Psoas muscle (tissue), 8 donors: ENCODE measurements at regions of chr4 and their contacts with region 1.

Region 1: GRCh38 chr4:8340781-8341241 is 71.3 kb downstream of the HTRA3 start:
- DNase-seq: peak; percentile 81 to 92
- ATAC-seq: peak; percentile 74 to 85 (median 78)
- H3K4me3 ChIP-seq: no peak overlapping the region
- H3K27ac ChIP-seq: peak overlapping the region; percentile 56
- H3K4me1 ChIP-seq: peaks cover 19% of the 10 kb centered on the region
- H3K27me3 ChIP-seq: no peaks in the 10 kb centered on the region
- CTCF ChIP-seq: no peak

Region 2: DNA sequence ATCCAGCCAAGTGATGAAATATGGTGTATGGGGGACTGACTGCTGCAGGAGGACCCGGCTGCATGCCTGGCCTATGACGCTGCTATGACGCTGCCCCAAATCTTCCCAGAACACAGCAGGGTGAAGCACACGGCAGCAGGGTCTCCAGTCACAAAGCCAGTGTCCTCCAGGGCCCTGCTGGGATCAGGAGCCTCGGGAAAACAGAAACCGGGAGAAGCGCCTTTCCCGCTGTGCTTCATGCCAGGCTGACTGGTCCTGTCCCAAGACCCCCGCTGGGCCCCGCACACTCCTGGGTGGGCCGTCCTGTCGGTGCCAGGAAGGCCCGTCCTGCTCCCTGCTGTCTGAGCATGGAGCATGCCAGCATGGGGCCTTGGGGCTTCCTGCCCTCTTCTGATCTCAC is 35.5 kb after region 1 on chr4:
- intact Hi-C with region 1: loop called in 1 of 2 experiments (anchors 5 kb)
- DNase-seq: peak in 1 of 2 donors; percentile 22
- ATAC-seq: no peak
- H3K4me3 ChIP-seq: no peak overlapping the region
- H3K27ac ChIP-seq: no peak overlapping the region
- H3K4me1 ChIP-seq: peaks cover 13% of the 10 kb centered on the region
- H3K27me3 ChIP-seq: no peaks in the 10 kb centered on the region
- CTCF ChIP-seq: no peak

Region 3: GRCh38 chr4:8384397-8385060 is 43.7 kb after region 1 on chr4:
- intact Hi-C with region 1: loop called (anchors 5 kb)
- DNase-seq: peak in 1 of 2 donors; percentile 49
- ATAC-seq: no peak
- H3K4me3 ChIP-seq: no peak overlapping the region
- H3K27ac ChIP-seq: no peak overlapping the region
- H3K4me1 ChIP-seq: peaks cover 19% of the 10 kb centered on the region
- H3K27me3 ChIP-seq: no peaks in the 10 kb centered on the region
- CTCF ChIP-seq: no peak

Region 4: DNA sequence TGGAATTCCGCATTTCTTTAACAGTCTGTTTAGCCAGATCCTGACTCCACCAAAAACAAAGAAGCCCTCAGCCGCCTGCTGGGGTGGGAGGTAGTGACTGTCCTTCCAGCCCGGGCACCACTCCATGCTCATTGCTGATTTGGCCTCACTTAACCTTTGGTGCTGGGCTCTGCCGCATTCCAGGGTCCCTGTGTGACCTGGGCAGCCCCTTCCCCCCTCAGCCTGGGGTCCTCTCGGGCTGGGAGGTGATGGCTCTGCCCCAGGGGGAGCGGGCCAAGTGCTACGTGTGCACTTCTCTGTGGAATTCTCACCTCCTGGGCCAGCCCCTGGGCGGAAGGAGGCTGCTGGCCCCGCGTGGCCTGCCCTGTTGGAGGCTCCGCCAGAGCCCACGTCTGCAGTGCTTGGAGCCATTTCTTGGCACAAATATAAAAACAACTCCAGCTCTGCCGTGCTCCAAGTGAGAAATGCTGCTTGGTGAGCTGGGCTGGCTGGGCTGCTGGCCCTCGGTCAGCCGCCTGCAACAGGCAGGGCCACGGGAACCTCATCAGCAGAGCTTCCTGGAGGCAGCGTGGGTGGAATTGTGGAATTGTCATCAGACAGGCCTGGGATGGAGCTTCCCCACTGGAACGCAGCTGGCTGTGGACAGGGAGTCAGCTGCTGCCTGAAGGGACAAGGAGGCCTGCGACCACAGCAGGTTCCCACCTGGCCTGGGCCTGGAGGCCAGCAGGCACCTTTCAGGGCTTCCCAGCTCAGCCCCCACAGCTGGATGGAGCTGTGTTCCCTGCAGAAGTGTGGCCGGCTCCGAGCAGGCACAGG is 165.8 kb after region 1 on chr4:
- intact Hi-C with region 1: no loop called
- DNase-seq: peak in 1 of 2 donors; percentile 49
- ATAC-seq: peak; percentile 34 to 59 (median 40)
- H3K4me3 ChIP-seq: no peak overlapping the region
- H3K27ac ChIP-seq: peak overlapping the region; percentile 39
- H3K4me1 ChIP-seq: peaks cover 14% of the 10 kb centered on the region
- H3K27me3 ChIP-seq: no peaks in the 10 kb centered on the region
- CTCF ChIP-seq: no peak

Region 5: DNA sequence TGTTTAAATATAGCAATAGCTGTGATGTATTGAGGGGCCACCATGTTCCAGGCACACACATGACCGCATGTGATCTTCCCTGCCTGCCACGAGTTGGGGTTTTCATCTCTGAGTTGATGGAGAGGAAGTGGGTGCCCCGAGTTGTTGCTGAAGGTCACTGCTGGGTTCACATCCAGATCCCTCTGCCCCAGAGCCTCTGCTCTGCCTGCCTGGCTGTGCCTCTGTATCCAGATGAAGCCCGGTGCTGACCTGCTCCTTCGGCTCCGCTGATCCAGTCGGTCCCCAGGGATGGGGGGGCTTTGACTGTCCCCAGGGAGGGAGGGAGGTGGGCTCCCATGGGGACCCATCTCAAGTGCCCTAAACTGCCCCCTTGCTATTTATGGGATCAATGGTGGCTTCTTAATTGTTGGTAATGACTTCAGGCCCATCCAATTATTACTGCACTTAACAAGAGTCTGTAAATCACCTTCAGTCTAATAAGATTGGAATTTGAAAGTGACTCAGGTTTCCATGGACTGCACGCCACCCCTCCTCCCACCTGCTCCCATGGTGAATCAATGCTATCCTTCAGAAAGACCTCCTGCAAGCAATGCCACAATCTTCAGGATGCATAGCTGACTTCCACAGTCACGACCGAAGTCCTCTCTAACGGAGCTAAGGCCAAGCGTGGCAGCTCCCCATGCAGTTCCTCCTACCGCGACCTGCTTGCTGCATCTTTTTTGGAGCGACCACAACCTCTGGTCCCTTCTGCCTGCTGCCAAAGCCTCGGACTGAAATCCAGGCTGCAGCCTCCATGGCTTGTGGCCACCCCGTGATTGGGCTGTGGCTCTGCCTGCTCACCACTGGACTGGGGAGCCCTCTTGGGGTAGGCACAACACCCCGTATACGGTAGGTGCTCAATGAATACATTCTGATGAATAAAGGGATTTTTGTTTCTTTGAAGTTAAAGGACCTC is 324.9 kb after region 1 on chr4:
- intact Hi-C with region 1: no loop called
- DNase-seq: no peak
- ATAC-seq: no peak
- H3K4me3 ChIP-seq: no peak overlapping the region
- H3K27ac ChIP-seq: no peak overlapping the region
- H3K4me1 ChIP-seq: no peaks in the 10 kb centered on the region
- H3K27me3 ChIP-seq: peaks cover 0 to 12% (median 1%) of the 10 kb centered on the region in 3 donors
- CTCF ChIP-seq: no peak